Activated T-helper 2 cell treated with anti-CD3 and anti-CD28 coated beads, Interferon-gamma antibody, Interleukin-2, Interleukin-4, amounts not matched to agents 10 μg/mL and 5 μg/mL and 100 μg/mL, durations not matched to agents 14 hours and 24 hours and 36 hours (primary cell): ENCODE measurements at regions of chr12 and their contacts with region 1.

Region 1: GRCh38 chr12:50132505-50133135 is 20.6 kb downstream of the COX14 start:
- DNase-seq: no peak
- H3K4me3 Mint-ChIP-seq: no peak overlapping the region
- H3K27ac Mint-ChIP-seq: peak overlapping the region; percentile 44
- H3K4me1 Mint-ChIP-seq: peaks cover 10% of the 10 kb centered on the region
- H3K27me3 Mint-ChIP-seq: no peaks in the 10 kb centered on the region

Region 2: DNA sequence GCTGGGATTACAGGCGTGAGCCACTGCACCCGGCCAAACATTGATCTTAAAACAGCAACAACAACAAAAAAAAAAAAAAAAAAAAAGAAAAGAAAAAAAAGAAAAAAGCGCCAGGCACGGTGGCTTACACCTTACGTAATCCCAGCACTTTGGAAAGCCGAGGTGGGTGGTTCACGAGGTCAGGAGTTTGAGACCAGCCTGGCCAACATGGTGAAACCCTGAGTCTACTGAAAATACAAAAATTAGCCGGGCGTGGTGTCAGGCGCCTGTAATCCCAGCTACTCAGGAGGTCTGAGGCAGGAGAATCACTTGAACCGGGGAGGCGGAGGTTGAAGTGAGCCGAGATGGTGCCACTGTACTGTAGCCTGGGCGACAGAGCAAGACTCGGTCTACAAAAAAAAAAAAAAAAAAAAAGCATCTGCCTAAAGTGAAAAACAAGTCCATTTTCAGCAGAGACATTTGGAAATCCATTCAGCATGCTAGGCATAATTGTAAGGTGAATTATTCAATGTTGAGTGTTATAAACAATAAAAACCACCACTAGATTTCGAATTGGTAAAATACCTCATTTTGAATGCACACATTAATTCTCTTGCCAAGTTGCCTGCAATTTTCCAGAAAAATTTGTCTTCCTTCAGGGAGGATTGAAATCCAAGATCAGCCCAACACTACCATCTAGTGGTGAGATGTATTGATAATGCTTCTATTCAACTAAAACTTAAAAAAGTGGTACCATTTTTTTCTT is 42.5 kb after region 1 on chr12:
- intact Hi-C with region 1: loop called (anchors 1 kb)
- DNase-seq: no peak
- H3K4me3 Mint-ChIP-seq: no peak overlapping the region
- H3K27ac Mint-ChIP-seq: peak overlapping the region; percentile 28
- H3K4me1 Mint-ChIP-seq: peaks cover 9% of the 10 kb centered on the region
- H3K27me3 Mint-ChIP-seq: no peaks in the 10 kb centered on the region

Region 3: GRCh38 chr12:50201978-50202521 is 69.4 kb after region 1 on chr12:
- intact Hi-C with region 1: no loop called
- DNase-seq: no peak
- H3K4me3 Mint-ChIP-seq: no peak overlapping the region
- H3K27ac Mint-ChIP-seq: no peak overlapping the region
- H3K4me1 Mint-ChIP-seq: peaks cover 24% of the 10 kb centered on the region
- H3K27me3 Mint-ChIP-seq: no peaks in the 10 kb centered on the region

Region 4: DNA sequence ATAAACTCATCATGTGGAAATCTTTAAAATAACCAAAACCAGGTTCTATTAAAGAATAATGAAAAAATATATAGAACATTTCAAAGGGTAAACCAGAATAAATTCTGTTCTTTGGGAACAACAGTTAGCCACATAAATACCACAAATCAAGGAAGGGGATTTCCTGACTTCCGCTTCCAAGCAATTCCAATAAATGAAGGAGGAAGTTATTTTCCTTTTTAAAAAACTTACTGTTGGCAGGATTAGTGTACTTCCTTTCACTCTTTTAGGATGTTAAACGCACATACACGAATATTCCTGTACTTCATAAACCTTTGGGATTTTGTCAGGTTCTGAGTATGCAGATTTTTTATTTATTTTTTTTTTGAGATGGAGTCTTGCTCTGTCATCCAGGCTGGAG is 164.4 kb after region 1 on chr12:
- intact Hi-C with region 1: no loop called
- DNase-seq: no peak
- H3K4me3 Mint-ChIP-seq: no peak overlapping the region
- H3K27ac Mint-ChIP-seq: no peak overlapping the region
- H3K4me1 Mint-ChIP-seq: peaks cover 4% of the 10 kb centered on the region
- H3K27me3 Mint-ChIP-seq: no peaks in the 10 kb centered on the region

Region 5: GRCh38 chr12:50314629-50315312 is 182.2 kb after region 1 on chr12:
- intact Hi-C with region 1: loop called (anchors 10 kb)
- DNase-seq: no peak
- H3K4me3 Mint-ChIP-seq: no peak overlapping the region
- H3K27ac Mint-ChIP-seq: no peak overlapping the region
- H3K4me1 Mint-ChIP-seq: peaks cover 2% of the 10 kb centered on the region
- H3K27me3 Mint-ChIP-seq: no peaks in the 10 kb centered on the region